Activated B cell treated with CpG ODN at 0.5 μM for 24 hours (primary cell): ENCODE measurements at regions of chr14 and their contacts with region 1.

Region 1: DNA sequence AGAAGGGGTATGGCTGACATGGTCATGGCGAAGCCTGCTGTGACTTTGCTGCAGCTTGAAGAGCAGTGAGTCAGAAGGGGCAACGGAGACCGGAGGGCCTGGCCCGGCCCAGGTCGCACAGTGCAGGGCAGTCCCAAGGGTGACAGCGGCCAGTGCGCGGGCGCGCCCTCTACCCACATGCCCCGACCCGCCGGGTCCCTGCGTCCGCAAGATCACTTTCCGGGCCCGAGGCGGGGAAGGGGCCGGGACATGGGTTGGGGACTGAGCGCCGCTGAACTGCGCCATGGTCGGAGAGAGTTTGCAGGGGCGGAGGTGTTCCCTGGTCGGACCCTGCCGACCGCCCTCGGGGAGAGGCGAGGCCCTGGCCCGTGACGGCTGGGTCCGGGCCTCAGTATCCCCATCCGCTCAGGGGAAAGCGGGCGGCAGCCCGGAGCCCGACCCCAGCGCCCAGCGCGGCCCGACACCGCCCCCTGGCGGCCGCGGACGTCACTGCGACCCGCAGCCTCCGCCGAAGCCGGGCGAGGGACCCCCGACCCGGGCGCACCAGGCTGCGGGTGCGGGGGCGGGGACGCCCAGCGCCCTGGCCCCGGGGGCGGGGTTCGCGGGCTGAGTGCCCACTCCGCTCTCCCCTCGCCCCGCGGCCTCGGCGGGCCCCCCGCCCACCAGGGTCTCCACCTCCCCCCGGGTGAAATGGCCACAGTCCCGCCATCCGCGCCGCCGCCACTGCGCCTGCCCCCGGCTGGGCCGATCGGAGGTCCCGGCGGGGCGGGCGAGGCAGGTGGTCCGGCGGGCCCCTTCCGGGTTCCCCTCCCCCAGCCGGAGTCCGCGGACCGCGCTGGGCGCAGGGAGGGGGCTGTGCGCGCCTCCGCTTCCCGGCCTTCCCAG is 7.2 kb upstream of the ANKRD9 start:
- DNase-seq: peak; percentile 79
- ATAC-seq: peak; percentile 88
- H3K4me3 Mint-ChIP-seq: peak overlapping the region; percentile 81
- H3K27ac Mint-ChIP-seq: no peak overlapping the region
- H3K4me1 Mint-ChIP-seq: peaks cover 3% of the 10 kb centered on the region
- H3K27me3 Mint-ChIP-seq: peaks cover 3% of the 10 kb centered on the region
- CTCF ChIP-seq: peak; percentile 48

Region 2: GRCh38 chr14:101575582-101575981 is 941.2 kb before region 1 on chr14:
- CTCF ChIA-PET with region 1: no interaction called
- POLR2A ChIA-PET with region 1: no interaction called
- intact Hi-C with region 1: no loop called
- DNase-seq: no peak
- ATAC-seq: no peak
- H3K4me3 Mint-ChIP-seq: no peak overlapping the region
- H3K27ac Mint-ChIP-seq: no peak overlapping the region
- H3K4me1 Mint-ChIP-seq: no peaks in the 10 kb centered on the region
- H3K27me3 Mint-ChIP-seq: peaks cover 3% of the 10 kb centered on the region
- CTCF ChIP-seq: no peak

Region 3: GRCh38 chr14:102408724-102409123 is 108.0 kb before region 1 on chr14:
- CTCF ChIA-PET with region 1: no interaction called
- POLR2A ChIA-PET with region 1: no interaction called
- intact Hi-C with region 1: no loop called
- DNase-seq: no peak
- ATAC-seq: no peak
- H3K4me3 Mint-ChIP-seq: no peak overlapping the region
- H3K27ac Mint-ChIP-seq: no peak overlapping the region
- H3K4me1 Mint-ChIP-seq: no peaks in the 10 kb centered on the region
- H3K27me3 Mint-ChIP-seq: no peaks in the 10 kb centered on the region
- CTCF ChIP-seq: no peak

Region 4: GRCh38 chr14:102437997-102438915 is 78.5 kb before region 1 on chr14:
- CTCF ChIA-PET with region 1: interaction called, 24 read pairs
- POLR2A ChIA-PET with region 1: no interaction called
- intact Hi-C with region 1: loop called (anchors 1 kb)
- DNase-seq: peak; percentile 61
- ATAC-seq: peak; percentile 71
- H3K4me3 Mint-ChIP-seq: no peak overlapping the region
- H3K27ac Mint-ChIP-seq: no peak overlapping the region
- H3K4me1 Mint-ChIP-seq: peaks cover 5% of the 10 kb centered on the region
- H3K27me3 Mint-ChIP-seq: no peaks in the 10 kb centered on the region
- CTCF ChIP-seq: no peak

Region 5: GRCh38 chr14:103444837-103445524 is 928.2 kb after region 1 on chr14:
- CTCF ChIA-PET with region 1: no interaction called
- POLR2A ChIA-PET with region 1: no interaction called
- intact Hi-C with region 1: no loop called
- DNase-seq: no peak
- ATAC-seq: no peak
- H3K4me3 Mint-ChIP-seq: no peak overlapping the region
- H3K27ac Mint-ChIP-seq: no peak overlapping the region
- H3K4me1 Mint-ChIP-seq: peaks cover 50% of the 10 kb centered on the region
- H3K27me3 Mint-ChIP-seq: no peaks in the 10 kb centered on the region
- CTCF ChIP-seq: no peak